Dendritic cell treated with granulocyte-macrophage colony-stimulating factor and Interleukin-4, amounts not matched to agents 40 ng/mL and 50 ng/mL, for 4 days (primary cell): ENCODE measurements at regions of chr2 and their contacts with region 1.

Region 1: DNA sequence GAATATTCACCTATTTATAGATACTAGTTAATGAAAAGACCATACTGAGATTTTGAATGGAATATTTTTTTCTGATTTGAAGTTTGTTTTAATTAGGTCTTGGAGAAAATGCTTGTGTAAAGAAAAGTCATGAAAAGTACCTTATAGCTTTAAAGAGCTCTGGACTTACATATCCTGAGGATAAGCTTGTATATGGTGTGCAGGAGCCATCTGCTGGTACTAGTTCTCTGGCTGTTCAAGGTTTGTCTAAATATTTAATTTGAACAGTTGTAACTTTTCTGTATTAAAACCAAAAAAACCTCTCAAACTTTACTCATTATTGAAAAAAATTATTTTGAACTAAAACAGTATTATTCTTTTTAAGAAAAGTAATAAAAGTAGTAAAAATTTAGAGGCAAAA is 50.1 kb downstream of the UBR3 start:
- H3K4me3 Mint-ChIP-seq: no peak overlapping the region
- H3K27ac Mint-ChIP-seq: no peak overlapping the region
- H3K4me1 Mint-ChIP-seq: no peaks in the 10 kb centered on the region
- H3K27me3 Mint-ChIP-seq: no peaks in the 10 kb centered on the region

Region 2: DNA sequence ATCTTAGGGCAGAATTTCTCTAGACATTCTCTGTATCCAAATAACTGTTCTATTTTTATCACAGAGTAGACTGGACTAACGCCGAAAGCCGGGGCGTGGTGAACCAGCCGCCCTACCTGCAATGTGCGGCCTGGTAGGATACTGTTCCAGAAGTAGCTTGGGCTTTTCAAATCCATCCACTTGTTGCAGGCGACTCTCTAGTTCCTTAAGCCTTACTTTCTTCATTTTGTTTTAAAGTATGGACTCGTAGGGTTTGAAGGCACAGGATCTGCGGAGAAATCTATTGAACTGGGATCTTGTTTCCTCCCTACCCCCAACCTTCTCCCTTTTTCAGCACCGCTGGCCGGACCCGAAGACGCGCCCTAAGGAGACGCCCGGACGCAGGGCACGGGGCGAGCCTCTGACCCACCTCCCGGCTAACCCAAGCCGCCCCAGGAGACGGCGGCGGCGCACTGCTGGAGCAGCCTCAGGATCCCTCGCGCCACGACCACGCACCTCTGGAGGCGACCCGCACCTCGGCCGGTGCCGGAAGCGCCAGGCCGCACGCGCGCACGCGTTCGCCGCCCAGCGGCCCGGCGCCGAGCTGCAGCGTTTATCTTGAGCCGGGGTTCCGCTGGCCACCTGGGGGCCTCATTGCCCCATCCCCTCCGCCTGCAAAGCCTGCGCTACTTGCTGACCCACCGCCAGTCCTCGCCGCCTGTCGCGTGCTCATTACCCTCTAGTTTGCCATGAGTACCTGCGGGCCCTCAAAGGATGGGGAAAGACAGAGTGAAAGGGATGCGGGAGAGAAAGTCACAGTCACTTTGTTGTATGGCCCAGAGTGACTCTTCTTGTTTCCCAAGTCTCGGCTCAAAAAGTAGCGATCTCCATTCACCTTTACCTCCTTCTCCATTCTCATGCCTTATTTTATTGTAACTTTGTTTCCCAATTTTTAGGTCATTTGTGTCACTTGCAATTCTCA is 52.7 kb before region 1 on chr2 and contains the start of gene METTL5:
- intact Hi-C with region 1: loop called (anchors 5 kb)
- H3K4me3 Mint-ChIP-seq: peak within 1 kb of the TSS; percentile 91
- H3K27ac Mint-ChIP-seq: peak within 1 kb of the TSS; percentile 90
- H3K4me1 Mint-ChIP-seq: peaks cover 40% of the 10 kb centered on the region
- H3K27me3 Mint-ChIP-seq: peaks cover 3% of the 10 kb centered on the region

Region 3: GRCh38 chr2:171420728-171421563 is 1543.5 kb after region 1 on chr2:
- intact Hi-C with region 1: no loop called
- H3K4me3 Mint-ChIP-seq: no peak overlapping the region
- H3K27ac Mint-ChIP-seq: no peak overlapping the region
- H3K4me1 Mint-ChIP-seq: peaks cover 7% of the 10 kb centered on the region
- H3K27me3 Mint-ChIP-seq: no peaks in the 10 kb centered on the region